Naive thymus-derived CD8-positive, alpha-beta T cell (primary cell): ENCODE measurements at regions of chr5 and their contacts with region 1.

Region 1: DNA sequence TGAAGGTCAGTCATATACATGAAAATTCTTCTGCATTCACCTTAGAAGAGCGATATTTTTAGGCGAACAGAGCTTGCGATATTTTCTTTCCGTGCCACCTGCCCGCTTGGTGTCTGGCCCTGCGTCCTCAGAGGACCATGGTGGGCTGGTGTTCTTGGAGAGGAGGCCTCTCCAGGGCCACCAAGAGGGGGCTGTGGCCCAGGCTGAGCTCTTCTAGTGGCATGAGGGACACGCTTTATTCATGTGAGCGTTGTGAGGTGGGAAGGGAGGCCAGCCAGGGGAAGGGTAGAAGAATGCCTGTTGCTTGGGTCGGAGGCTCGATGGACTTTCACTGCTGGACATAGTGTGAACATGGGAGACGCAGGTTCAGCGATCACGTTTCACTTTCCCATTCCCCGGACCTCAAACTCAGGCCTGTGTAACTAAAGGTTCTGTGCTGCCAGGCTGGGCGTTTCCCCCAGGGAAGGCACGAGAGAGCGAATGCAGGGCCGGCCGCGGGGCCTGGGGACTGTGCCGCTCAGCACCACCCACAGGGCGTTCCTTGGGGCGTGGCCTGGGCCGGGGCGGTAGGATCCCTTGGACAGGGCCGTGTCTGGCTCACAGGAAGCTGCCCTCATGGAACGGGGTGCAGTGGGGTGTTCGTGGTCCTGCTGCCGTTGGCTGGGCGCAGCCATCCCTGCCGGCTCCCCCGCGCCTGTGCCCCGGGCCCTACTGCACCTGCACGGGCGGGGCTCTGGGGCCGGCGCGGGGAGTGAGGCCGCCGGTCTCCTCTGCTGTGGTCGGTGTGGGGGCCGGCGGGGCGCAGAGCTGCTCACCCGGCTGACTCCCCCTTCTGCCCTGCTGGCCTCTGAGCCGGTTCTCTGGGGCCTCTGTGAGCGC is 40.7 kb upstream of the CLPTM1L start:
- DNase-seq: peak; percentile 62 to 89 (median 77)
- ATAC-seq: peak; percentile 79 to 80
- H3K4me3 Mint-ChIP-seq: peak overlapping the region; percentile 93 to 100 (median 98)
- H3K27ac Mint-ChIP-seq: peak overlapping the region; percentile 98 to 100 (median 100)
- H3K4me1 Mint-ChIP-seq: peaks cover 18 to 35% (median 34%) of the 10 kb centered on the region in 4 donors
- H3K27me3 Mint-ChIP-seq: peaks cover 0 to 3% (median 2%) of the 10 kb centered on the region in 5 donors

Region 2: DNA sequence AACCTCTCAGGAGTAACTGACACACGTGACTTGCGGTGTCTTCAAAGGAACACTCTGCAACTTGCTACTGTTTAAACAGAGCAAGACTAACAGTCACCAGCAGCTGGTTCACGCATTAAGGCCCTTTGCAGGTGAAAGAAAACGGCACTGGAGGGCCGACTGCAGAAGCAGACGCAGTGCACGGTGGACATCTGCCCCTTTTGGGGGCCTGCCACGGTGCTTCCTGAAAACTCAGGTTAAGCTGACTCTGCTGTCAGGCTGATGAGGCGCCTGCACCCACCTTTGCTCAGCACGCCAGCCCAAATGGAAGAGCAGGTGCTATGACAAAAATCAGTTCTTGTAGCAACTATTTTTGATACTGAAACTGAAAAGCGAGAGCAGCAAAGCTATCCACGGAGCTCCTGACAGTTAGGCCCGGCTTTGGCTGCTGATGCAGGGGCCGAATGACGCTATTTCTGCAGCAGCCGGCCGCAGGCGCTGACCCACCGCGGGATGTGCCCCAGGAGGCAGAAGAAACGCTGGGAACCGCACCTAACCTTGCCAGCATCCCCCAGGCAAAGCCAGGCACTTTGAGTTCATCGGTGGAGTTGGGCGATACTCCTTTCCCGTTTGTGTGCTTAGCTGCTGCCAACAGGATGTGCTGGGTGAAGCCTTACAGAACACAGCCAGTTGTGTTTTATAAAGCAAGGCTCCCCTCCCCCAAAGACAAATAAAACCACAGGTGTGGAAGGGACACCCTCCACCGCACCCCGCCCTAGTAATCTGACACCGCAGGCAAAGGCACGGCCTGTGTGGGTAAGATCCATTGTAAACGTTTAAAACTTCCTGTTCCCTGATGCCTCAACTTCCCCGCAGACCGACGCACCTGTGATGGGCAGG is 69.7 kb before region 1 on chr5:
- POLR2A ChIA-PET with region 1: interaction called, 43 read pairs
- DNase-seq: peak; percentile 38 to 84 (median 68)
- ATAC-seq: peak; percentile 65 to 76
- H3K4me3 Mint-ChIP-seq: peak overlapping the region; percentile 75 to 93 (median 84)
- H3K27ac Mint-ChIP-seq: peak overlapping the region; percentile 87 to 98 (median 92)
- H3K4me1 Mint-ChIP-seq: peaks cover 36 to 68% (median 63%) of the 10 kb centered on the region in 4 donors
- H3K27me3 Mint-ChIP-seq: no peaks in the 10 kb centered on the region

Region 3: GRCh38 chr5:1344975-1345838 is 40.4 kb before region 1 on chr5 and contains the start of gene CLPTM1L:
- POLR2A ChIA-PET with region 1: interaction called, 31 read pairs
- DNase-seq: peak; percentile 82 to 92 (median 89)
- ATAC-seq: peak; percentile 95
- H3K4me3 Mint-ChIP-seq: peak within 1 kb of the TSS; percentile 78 to 94 (median 91)
- H3K27ac Mint-ChIP-seq: peak within 1 kb of the TSS; percentile 86 to 93 (median 89)
- H3K4me1 Mint-ChIP-seq: peaks cover 15 to 40% (median 35%) of the 10 kb centered on the region in 4 donors
- H3K27me3 Mint-ChIP-seq: no peaks in the 10 kb centered on the region
- polyA plus RNA-seq, gene CLPTM1L: 24.9 to 66.4 (median 49.7) TPM

Region 4: DNA sequence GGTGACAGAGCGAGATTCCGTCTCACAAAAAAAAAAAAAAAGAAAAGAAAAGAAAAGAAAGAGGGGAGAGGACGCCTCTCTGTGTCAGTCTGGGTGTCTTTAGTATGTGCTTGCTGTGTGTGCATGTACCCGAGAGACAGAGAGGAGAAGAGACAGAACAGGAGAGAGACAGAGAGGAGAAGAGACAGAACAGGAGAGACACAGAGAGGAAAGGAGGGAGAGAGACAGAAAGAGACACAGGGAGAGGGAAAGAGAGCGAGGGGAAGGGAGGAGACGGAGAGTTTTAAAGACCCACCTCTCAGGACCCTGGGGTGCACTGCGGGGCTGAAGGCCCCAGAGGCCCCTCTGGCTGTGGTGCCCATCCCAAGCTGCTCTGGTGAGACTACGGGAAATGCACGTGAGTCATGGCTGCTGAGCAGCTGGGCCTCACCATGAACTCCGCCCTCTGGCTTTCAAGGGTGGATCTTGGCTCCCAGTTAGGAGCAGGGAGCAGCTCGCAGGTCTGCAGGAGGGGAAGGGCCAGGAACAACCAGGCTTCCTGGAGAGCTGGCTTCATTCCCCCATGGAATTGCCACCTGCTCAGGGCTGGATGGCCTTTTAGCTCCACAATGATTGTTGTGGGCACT is 51.7 kb after region 1 on chr5:
- POLR2A ChIA-PET with region 1: no interaction called
- DNase-seq: peak in 1 of 10 donors; percentile 23
- ATAC-seq: no peak
- H3K4me3 Mint-ChIP-seq: no peak overlapping the region
- H3K27ac Mint-ChIP-seq: peak overlapping the region in 1 of 10 donors; percentile 76
- H3K4me1 Mint-ChIP-seq: no peaks in the 10 kb centered on the region
- H3K27me3 Mint-ChIP-seq: peaks cover 10 to 70% (median 38%) of the 10 kb centered on the region in 5 donors

Region 5: GRCh38 chr5:1523771-1524480 is 138.3 kb after region 1 on chr5 and contains the start of gene LPCAT1:
- POLR2A ChIA-PET with region 1: interaction called, 16 read pairs
- DNase-seq: peak; percentile 44 to 84 (median 76)
- ATAC-seq: peak; percentile 85 to 87
- H3K4me3 Mint-ChIP-seq: peak within 1 kb of the TSS; percentile 76 to 93 (median 84)
- H3K27ac Mint-ChIP-seq: peak within 1 kb of the TSS in 9 of 10 donors; percentile 4 to 96 (median 74)
- H3K4me1 Mint-ChIP-seq: peaks cover 9 to 43% (median 21%) of the 10 kb centered on the region in 4 donors
- H3K27me3 Mint-ChIP-seq: no peaks in the 10 kb centered on the region
- polyA plus RNA-seq, gene LPCAT1: 18.6 to 46.3 (median 20.9) TPM

Region 6: DNA sequence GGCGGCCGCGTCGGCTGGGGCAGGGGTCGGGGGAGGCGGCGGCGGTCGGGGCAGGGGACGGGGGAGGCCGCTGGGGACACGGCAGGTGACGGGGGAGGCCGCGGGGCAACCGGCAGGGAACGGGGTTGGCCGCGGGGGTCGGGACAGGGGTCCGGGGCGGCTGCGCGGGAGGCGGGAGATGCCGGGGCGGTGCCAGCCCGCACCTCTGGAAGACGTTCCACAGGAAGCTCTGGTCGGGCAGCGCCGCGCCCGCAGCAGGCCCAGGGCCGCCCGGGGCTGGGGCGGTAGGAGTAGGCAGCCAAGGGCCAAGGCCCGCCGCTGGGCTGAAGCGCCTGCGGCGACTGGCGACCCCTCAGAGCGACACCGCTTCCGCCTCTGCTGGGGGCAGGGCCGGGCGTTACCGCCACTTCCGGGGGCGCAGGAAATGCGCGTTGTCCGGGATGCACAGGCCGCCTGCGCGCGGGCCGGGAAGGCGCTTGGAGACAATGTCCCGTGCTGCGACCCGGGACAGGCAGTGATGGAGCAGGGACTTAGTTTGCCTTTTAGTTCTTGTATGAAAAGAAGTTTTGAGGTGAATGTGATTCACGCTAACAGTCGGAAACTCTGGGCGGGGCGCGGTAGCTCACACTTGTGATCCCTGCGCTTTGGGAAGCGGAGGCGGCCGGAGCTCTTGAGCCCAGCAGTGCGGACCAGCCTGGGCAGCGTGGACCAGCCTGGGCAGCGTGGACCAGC is 248.1 kb after region 1 on chr5:
- POLR2A ChIA-PET with region 1: interaction called, 10 read pairs
- DNase-seq: peak; percentile 43 to 84 (median 69)
- ATAC-seq: peak; percentile 85 to 92
- H3K4me3 Mint-ChIP-seq: peak overlapping the region; percentile 89 to 98 (median 92)
- H3K27ac Mint-ChIP-seq: peak overlapping the region; percentile 86 to 96 (median 93)
- H3K4me1 Mint-ChIP-seq: peaks cover 19 to 44% (median 35%) of the 10 kb centered on the region in 4 donors
- H3K27me3 Mint-ChIP-seq: peaks cover 0 to 1% (median 0%) of the 10 kb centered on the region in 5 donors